GM12878 (cell line): ENCODE measurements at regions of chrX and their contacts with region 1.

Region 1: DNA sequence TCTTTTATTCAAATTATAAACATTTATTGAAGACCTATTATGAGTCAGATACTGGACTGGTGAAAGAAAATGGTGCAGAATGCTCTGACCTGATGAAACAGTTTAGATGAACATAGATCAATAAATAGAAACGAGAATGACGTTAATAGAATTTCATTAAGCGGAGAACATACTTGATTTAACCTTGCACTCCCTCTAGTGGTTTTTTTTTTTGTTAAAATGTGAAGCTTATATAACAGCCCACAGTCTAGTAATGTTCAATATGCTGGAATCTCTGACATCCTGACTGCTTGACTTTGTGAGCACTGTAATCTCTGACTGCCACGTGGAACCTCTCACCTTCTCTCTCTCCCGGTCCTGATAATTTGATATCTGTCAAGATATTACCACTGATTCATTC is 32.3 kb downstream of the HDAC8 start:
- DNase-seq: no peak
- ATAC-seq: peak; percentile 79
- H3K4me3 ChIP-seq: no peak overlapping the region
- H3K27ac ChIP-seq: no peak overlapping the region
- H3K4me1 ChIP-seq: no peaks in the 10 kb centered on the region
- H3K27me3 ChIP-seq: no peaks in the 10 kb centered on the region
- CTCF ChIP-seq: peak in 2 of 3 experiments; percentile 15 to 38; a peak in 1 of 6 replicates
- EP300 ChIP-seq: no peak
- POLR2A ChIP-seq: no peak
- RAD21 ChIP-seq: peak; percentile 47; the same call in 1 of the 2 replicates

Region 2: DNA sequence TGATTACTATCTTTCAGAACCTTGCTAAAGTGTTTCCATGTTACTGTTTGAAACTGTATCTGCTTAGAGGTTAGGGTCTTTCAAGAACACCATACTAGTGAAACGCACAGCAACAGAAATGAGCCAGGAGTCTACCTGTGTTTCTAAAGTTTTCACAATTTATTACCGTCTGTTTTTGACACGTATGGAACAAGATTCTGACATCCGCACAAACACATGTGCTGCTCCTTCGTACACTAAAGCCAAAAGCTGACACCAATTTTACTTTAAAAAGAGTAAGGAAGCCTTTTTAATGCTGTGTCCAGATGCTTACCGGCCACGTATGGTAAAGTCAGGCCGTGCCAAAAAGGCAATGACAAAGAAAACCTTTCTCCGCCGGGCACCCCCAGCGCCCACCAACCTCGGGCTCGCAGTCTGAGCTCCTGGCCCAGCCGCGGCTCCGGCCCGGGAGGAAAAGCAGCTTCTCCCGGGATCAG is 263.8 kb before region 1 on chrX:
- CTCF ChIA-PET with region 1: interaction called, 12 read pairs
- POLR2A ChIA-PET with region 1: no interaction called
- RAD21 ChIA-PET with region 1: interaction called, 11 read pairs
- SMC1A ChIA-PET with region 1: interaction called, 4 read pairs
- in situ Hi-C with region 1: no loop called
- intact Hi-C with region 1: no loop called
- DNase-seq: no peak
- ATAC-seq: peak; percentile 25
- H3K4me3 ChIP-seq: peak overlapping the region; percentile 83
- H3K27ac ChIP-seq: peak overlapping the region; percentile 94
- H3K4me1 ChIP-seq: peaks cover 4% of the 10 kb centered on the region; the same call in 1 of the 2 replicates
- H3K27me3 ChIP-seq: peaks cover 0 to 2% of the 10 kb centered on the region in 2 experiments; a peak in 2 of 4 replicates
- CTCF ChIP-seq: no peak
- EP300 ChIP-seq: no peak
- POLR2A ChIP-seq: no peak
- RAD21 ChIP-seq: no peak

Region 3: GRCh38 chrX:72526528-72527508 is 13.5 kb before region 1 on chrX:
- CTCF ChIA-PET with region 1: interaction called, 12 read pairs
- POLR2A ChIA-PET with region 1: interaction called, 5 read pairs
- RAD21 ChIA-PET with region 1: no interaction called
- SMC1A ChIA-PET with region 1: interaction called, 4 read pairs
- in situ Hi-C with region 1: no loop called
- intact Hi-C with region 1: no loop called
- DNase-seq: no peak
- ATAC-seq: peak; percentile 25; the same call in 1 of the 3 replicates
- H3K4me3 ChIP-seq: no peak overlapping the region
- H3K27ac ChIP-seq: no peak overlapping the region
- H3K4me1 ChIP-seq: no peaks in the 10 kb centered on the region
- H3K27me3 ChIP-seq: no peaks in the 10 kb centered on the region
- CTCF ChIP-seq: no peak
- EP300 ChIP-seq: no peak
- POLR2A ChIP-seq: no peak
- RAD21 ChIP-seq: no peak

Region 4: DNA sequence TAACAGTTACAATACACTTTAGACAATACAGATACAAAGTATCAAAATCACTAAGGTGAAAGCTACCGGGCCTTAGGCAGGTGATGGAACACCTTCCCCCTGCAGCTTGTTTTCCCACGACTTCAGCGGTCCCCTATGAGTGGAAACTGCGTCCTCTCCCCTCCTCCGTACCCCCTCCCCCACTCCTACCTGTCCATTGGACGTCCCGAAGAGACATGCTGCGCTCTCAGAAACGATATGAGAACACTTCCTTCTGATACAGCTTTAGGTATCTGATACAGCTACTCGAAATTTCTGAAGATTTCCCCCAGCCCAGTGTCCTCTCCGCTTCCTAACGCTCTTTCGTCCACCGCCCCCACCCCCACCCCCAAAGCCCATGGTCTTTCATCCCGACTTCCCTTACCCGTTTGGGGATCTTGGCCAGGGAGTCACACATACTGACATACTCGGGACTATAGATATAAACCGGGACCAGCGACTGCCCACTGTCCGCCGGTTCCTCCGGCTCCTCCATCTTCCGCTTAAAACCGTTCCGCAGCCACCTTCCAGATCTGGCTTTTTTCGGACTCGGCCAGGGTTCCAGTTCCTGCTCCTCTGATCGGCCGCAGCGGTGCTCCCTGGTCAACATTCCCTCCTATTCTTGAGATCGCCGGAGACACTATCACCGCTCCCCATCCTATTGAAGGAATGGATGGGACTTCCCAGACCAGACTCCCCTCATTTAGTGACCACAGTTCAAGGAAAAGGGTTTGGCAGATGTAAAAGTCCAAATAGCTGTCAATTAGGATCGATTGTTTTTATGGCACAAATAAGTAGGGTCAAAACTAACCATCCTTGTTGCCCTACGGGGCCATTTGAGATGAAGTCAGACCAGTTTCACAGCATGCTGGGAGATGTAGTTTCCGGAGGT is 32.2 kb after region 1 on chrX and contains the start of gene HDAC8:
- CTCF ChIA-PET with region 1: no interaction called
- POLR2A ChIA-PET with region 1: no interaction called
- RAD21 ChIA-PET with region 1: no interaction called
- SMC1A ChIA-PET with region 1: no interaction called
- in situ Hi-C with region 1: no loop called
- intact Hi-C with region 1: no loop called
- DNase-seq: peak; percentile 63
- ATAC-seq: peak; percentile 95
- H3K4me3 ChIP-seq: peak within 1 kb of the TSS; percentile 63
- H3K27ac ChIP-seq: peak within 1 kb of the TSS; percentile 69
- H3K4me1 ChIP-seq: no peaks in the 10 kb centered on the region
- H3K27me3 ChIP-seq: no peaks in the 10 kb centered on the region
- CTCF ChIP-seq: no peak
- EP300 ChIP-seq: no peak
- POLR2A ChIP-seq: peak; percentile 48; the same call in 1 of the 2 replicates
- RAD21 ChIP-seq: no peak
- polyA plus RNA-seq, gene HDAC8: 31.3 to 34.1 TPM